Naive thymus-derived CD4-positive, alpha-beta T cell (primary cell): ENCODE measurements at regions of chr7 and their contacts with region 1.

Region 1: DNA sequence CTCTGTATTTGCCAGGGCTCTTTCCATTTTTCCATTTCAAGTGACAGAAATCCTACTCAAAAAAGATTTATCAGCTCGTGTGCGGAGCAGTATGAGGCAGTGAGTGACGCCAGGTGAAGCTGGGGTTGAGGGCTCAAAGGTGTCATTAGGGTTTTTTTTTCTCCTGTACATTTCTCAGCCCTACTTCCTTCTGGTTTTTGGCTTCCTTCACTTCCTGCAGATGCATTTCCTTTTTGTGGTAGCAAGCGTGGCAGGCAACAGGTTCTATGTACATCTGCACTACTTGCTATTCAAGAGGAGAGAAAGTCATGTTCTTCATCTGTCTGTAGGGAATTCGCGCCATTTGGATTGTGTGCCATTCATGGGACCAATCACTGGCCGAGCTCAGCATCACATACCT is 52.8 kb upstream of the AOAH start:
- DNase-seq: peak; percentile 11 to 90 (median 85)
- ATAC-seq: peak; percentile 78
- H3K4me3 ChIP-seq: peak overlapping the region; percentile 41
- H3K4me3 Mint-ChIP-seq: peak overlapping the region; percentile 76 to 92 (median 84)
- H3K27ac ChIP-seq: peak overlapping the region; percentile 75
- H3K27ac Mint-ChIP-seq: peak overlapping the region; percentile 78 to 99 (median 95)
- H3K4me1 ChIP-seq: peaks cover 68 to 69% of the 10 kb centered on the region in 2 donors
- H3K4me1 Mint-ChIP-seq: peaks cover 65 to 90% (median 85%) of the 10 kb centered on the region in 7 donors
- H3K27me3 ChIP-seq: no peaks in the 10 kb centered on the region
- H3K27me3 Mint-ChIP-seq: no peaks in the 10 kb centered on the region

Region 2: GRCh38 chr7:36760856-36761762 is 16.0 kb before region 1 on chr7:
- CTCF ChIA-PET with region 1: interaction called, 5 read pairs
- POLR2A ChIA-PET with region 1: interaction called, 4 read pairs
- intact Hi-C with region 1: loop called in 1 of 2 experiments (anchors 2 kb)
- DNase-seq: no peak
- ATAC-seq: no peak
- H3K4me3 ChIP-seq: no peak overlapping the region
- H3K4me3 Mint-ChIP-seq: no peak overlapping the region
- H3K27ac ChIP-seq: no peak overlapping the region
- H3K27ac Mint-ChIP-seq: peak overlapping the region in 2 of 9 donors; percentile 10 to 36
- H3K4me1 ChIP-seq: peaks cover 0 to 13% of the 10 kb centered on the region in 2 donors
- H3K4me1 Mint-ChIP-seq: peaks cover 10 to 35% (median 25%) of the 10 kb centered on the region in 7 donors
- H3K27me3 ChIP-seq: no peaks in the 10 kb centered on the region
- H3K27me3 Mint-ChIP-seq: peaks cover 0 to 3% (median 0%) of the 10 kb centered on the region in 5 donors

Region 3: GRCh38 chr7:36790311-36790787 is 13.3 kb after region 1 on chr7:
- CTCF ChIA-PET with region 1: interaction called, 11 read pairs
- POLR2A ChIA-PET with region 1: interaction called, 9 read pairs
- intact Hi-C with region 1: loop called (anchors 1 kb)
- DNase-seq: peak in 5 of 9 donors; percentile 29 to 61 (median 58)
- ATAC-seq: peak; percentile 37
- H3K4me3 ChIP-seq: no peak overlapping the region
- H3K4me3 Mint-ChIP-seq: peak overlapping the region in 9 of 10 donors; percentile 1 to 67 (median 51)
- H3K27ac ChIP-seq: peak overlapping the region; percentile 2
- H3K27ac Mint-ChIP-seq: peak overlapping the region; percentile 35 to 93 (median 77)
- H3K4me1 ChIP-seq: peaks cover 45 to 59% of the 10 kb centered on the region in 2 donors
- H3K4me1 Mint-ChIP-seq: peaks cover 53 to 82% (median 76%) of the 10 kb centered on the region in 7 donors
- H3K27me3 ChIP-seq: no peaks in the 10 kb centered on the region
- H3K27me3 Mint-ChIP-seq: no peaks in the 10 kb centered on the region

Region 4: GRCh38 chr7:36820527-36821170 is 43.6 kb after region 1 on chr7:
- CTCF ChIA-PET with region 1: no interaction called
- POLR2A ChIA-PET with region 1: no interaction called
- intact Hi-C with region 1: no loop called
- DNase-seq: no peak
- ATAC-seq: no peak
- H3K4me3 ChIP-seq: no peak overlapping the region
- H3K4me3 Mint-ChIP-seq: no peak overlapping the region
- H3K27ac ChIP-seq: no peak overlapping the region
- H3K27ac Mint-ChIP-seq: peak overlapping the region in 2 of 9 donors; percentile 3 to 19
- H3K4me1 ChIP-seq: no peaks in the 10 kb centered on the region
- H3K4me1 Mint-ChIP-seq: no peaks in the 10 kb centered on the region
- H3K27me3 ChIP-seq: no peaks in the 10 kb centered on the region
- H3K27me3 Mint-ChIP-seq: peaks cover 0 to 7% (median 0%) of the 10 kb centered on the region in 5 donors

Region 5: DNA sequence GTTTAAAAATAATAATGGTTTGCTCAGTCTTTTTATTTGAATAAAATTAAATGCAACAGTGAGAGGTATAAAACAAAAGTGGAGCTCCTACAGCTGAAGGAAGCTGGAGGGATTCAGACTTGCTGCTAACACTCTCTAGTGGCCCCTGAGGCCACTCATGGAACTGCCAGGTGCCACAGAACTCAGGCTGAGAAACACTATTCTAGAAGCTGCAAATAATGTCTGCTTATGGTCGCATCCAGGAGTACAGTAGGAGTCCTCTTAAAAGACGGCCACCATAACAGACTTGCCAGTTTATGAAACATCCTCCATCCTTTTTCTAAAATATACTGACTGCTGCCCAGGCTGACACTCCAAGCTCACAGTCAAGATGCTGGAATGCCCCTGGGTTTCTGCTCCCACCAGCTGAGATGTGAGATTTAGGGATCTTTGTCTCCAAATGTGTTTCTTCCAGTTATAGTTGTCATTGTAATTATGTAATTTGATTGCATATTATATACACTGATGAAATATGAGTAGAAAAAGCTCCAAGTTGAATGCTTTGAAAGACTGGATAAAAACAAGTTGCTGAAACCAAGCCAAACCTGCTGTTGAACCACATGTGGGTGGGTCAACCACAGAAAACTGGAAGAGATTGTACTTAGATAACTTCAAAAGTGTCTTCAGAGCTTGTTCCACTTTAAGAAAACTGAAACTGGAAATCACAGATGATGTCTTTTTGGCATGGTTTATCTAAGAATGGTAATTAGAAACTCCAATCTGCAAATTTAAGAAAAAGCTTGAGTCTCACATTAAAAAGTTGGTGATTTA is 160.9 kb after region 1 on chr7:
- CTCF ChIA-PET with region 1: no interaction called
- POLR2A ChIA-PET with region 1: no interaction called
- intact Hi-C with region 1: loop called in 1 of 2 experiments (anchors 2 kb)
- DNase-seq: peak in 8 of 9 donors; percentile 31 to 78 (median 62)
- ATAC-seq: peak; percentile 29
- H3K4me3 ChIP-seq: peak overlapping the region; percentile 10
- H3K4me3 Mint-ChIP-seq: peak overlapping the region in 8 of 10 donors; percentile 8 to 68 (median 50)
- H3K27ac ChIP-seq: no peak overlapping the region
- H3K27ac Mint-ChIP-seq: peak overlapping the region in 8 of 9 donors; percentile 57 to 95 (median 90)
- H3K4me1 ChIP-seq: peaks cover 0 to 5% of the 10 kb centered on the region in 2 donors
- H3K4me1 Mint-ChIP-seq: peaks cover 11 to 70% (median 63%) of the 10 kb centered on the region in 7 donors
- H3K27me3 ChIP-seq: no peaks in the 10 kb centered on the region
- H3K27me3 Mint-ChIP-seq: no peaks in the 10 kb centered on the region

Region 6: DNA sequence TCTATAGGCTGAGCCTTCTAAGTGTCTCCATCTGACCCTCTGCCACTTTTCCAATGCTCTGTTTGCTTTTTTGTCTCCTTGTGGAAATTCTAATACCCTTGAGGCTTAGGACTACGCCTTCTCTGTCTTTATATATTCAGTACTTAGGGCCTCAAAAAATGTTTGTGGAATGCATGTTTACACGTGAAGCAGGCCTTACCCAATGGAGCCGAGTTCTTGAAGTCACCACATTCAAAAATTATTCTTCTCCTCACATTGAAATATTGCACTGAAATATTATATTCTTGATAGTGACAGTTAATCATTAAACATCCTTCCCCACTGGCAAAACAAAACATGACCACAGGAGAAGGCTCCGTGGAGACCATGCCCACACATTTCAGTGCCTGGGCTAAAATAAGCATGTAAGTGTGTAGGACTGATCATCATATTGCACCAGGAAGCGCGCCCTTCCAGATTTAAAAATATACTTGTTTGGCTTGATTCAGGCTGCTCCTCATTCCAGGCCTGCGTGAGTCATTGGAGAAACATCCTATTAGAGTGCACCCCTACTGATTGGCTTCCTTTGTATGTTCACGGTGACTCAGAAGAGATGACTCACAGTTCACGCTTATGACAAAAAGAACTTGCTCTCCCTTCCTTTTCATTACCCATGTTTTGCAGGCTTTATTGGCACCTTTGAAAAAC is 254.7 kb after region 1 on chr7:
- CTCF ChIA-PET with region 1: no interaction called
- POLR2A ChIA-PET with region 1: no interaction called
- intact Hi-C with region 1: no loop called
- DNase-seq: peak in 1 of 9 donors; percentile 24
- ATAC-seq: peak; percentile 81
- H3K4me3 ChIP-seq: no peak overlapping the region
- H3K4me3 Mint-ChIP-seq: no peak overlapping the region
- H3K27ac ChIP-seq: no peak overlapping the region
- H3K27ac Mint-ChIP-seq: peak overlapping the region in 4 of 9 donors; percentile 28 to 58 (median 38)
- H3K4me1 ChIP-seq: peaks cover 0 to 8% of the 10 kb centered on the region in 2 donors
- H3K4me1 Mint-ChIP-seq: peaks cover 29 to 66% (median 50%) of the 10 kb centered on the region in 7 donors
- H3K27me3 ChIP-seq: no peaks in the 10 kb centered on the region
- H3K27me3 Mint-ChIP-seq: no peaks in the 10 kb centered on the region